HepG2 (cell line): ENCODE measurements at regions of chr2 and their contacts with region 1.

Region 1: GRCh38 chr2:55168221-55169154 is 63.6 kb downstream of the CLHC1 start:
- DNase-seq: peak; percentile 70
- ATAC-seq: peak; percentile 78
- H3K4me3 ChIP-seq: peak overlapping the region in 2 of 3 experiments; percentile 5 to 30; a peak in 3 of 6 replicates
- H3K27ac ChIP-seq: no peak overlapping the region
- H3K4me1 ChIP-seq: peaks cover 31% of the 10 kb centered on the region
- H3K27me3 ChIP-seq: peaks cover 0 to 6% of the 10 kb centered on the region in 2 experiments; a peak in 2 of 5 replicates
- CTCF ChIP-seq: peak; percentile 86
- EP300 ChIP-seq: no peak
- POLR2A ChIP-seq: no peak
- RAD21 ChIP-seq: peak; percentile 83

Region 2: DNA sequence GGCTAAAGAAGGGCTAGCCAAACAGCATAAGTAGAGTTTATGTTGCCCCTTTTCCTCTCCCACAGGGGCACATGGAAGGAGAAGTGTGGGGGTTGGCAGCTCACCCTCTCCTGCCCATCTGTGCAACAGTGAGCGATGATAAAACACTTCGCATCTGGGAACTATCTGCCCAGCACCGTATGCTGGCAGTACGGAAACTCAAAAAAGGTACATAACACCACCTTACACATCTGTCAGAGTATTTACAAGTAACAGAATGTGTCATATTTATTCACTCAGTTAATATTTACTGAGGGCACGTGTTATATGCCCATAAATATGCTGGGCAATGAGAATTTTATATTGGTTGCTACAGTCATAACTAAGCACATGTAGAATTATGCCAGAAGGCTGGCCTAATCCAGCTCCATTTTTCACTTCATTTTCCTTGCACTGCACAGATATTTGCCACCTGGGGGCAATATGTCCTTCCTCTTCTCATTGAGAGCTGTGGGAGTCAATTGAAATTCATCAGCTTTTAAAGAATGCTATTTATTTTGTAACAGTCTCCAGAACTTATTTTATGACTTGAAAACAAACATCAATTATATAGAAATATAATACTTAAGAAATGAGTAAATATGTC is 268.8 kb before region 1 on chr2:
- CTCF ChIA-PET with region 1: interaction called, 11 read pairs
- POLR2A ChIA-PET with region 1: no interaction called
- in situ Hi-C with region 1: no loop called
- intact Hi-C with region 1: loop called (anchors 1 kb)
- DNase-seq: peak; percentile 55
- ATAC-seq: peak; percentile 81
- H3K4me3 ChIP-seq: no peak overlapping the region
- H3K27ac ChIP-seq: no peak overlapping the region
- H3K4me1 ChIP-seq: peaks cover 18% of the 10 kb centered on the region
- H3K27me3 ChIP-seq: no peaks in the 10 kb centered on the region
- CTCF ChIP-seq: peak; percentile 72
- EP300 ChIP-seq: no peak
- POLR2A ChIP-seq: no peak
- RAD21 ChIP-seq: peak; percentile 63

Region 3: GRCh38 chr2:55063713-55064323 is 104.7 kb before region 1 on chr2:
- CTCF ChIA-PET with region 1: no interaction called
- POLR2A ChIA-PET with region 1: no interaction called
- in situ Hi-C with region 1: no loop called
- intact Hi-C with region 1: loop called (anchors 2 kb)
- DNase-seq: peak; percentile 32
- ATAC-seq: peak; percentile 98
- H3K4me3 ChIP-seq: no peak overlapping the region
- H3K27ac ChIP-seq: no peak overlapping the region
- H3K4me1 ChIP-seq: peaks cover 11% of the 10 kb centered on the region; the same call in 1 of the 2 replicates
- H3K27me3 ChIP-seq: no peaks in the 10 kb centered on the region
- CTCF ChIP-seq: peak; percentile 68
- EP300 ChIP-seq: no peak
- POLR2A ChIP-seq: no peak
- RAD21 ChIP-seq: 0 out of 2 replicates have a peak, but pooled peaks have one; percentile 19

Region 4: DNA sequence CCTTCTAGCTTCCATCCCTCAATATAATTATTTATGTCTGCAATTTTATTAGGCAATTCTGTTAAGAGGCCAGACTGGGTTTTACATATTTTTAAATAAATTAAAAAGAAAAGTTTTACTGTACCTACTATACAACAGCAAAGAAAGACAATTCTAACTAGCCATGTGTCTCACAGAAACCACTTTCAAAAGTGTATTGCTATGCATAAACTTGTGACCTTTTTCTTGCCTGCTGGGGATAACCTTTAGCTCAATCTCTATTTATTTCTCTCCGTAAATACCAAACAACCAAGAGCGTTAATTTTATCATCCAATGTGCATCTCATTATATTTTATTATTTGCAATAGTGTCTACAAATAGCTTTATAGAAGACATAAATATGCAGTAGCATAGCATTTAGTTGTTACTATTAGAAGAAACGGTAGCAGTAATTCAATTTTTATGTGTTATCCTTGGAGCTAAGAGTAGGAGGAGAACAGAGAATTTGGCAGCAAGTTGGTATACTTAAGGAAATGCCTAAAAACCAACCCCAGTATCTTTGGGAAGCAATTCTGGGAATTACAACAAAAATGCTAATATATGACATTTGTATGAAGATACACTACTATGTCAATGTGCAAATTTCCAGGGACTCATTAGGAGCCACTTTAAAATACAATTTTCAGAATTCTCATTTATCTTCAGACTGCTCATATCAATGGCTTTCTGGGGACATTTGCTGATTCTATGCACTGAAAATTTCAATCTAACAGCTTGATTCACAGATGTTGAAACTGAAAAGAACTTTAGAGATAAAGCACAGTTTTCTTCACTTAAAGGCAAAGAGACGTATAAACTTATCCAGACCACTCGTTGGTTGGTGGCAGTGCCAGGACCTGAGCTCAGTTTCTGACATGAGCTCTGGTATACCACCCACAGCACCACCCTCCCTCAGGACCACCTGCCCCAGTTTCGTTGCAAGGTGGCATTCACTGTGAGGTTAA is 95.2 kb before region 1 on chr2:
- CTCF ChIA-PET with region 1: interaction called, 3 read pairs
- POLR2A ChIA-PET with region 1: no interaction called
- in situ Hi-C with region 1: loop called (anchors 5 kb)
- intact Hi-C with region 1: loop called (anchors 1 kb)
- DNase-seq: no peak
- ATAC-seq: no peak
- H3K4me3 ChIP-seq: no peak overlapping the region
- H3K27ac ChIP-seq: no peak overlapping the region
- H3K4me1 ChIP-seq: 0 out of 2 replicates have a peak, but pooled peaks cover 12% of the 10 kb centered on the region
- H3K27me3 ChIP-seq: no peaks in the 10 kb centered on the region
- CTCF ChIP-seq: no peak
- EP300 ChIP-seq: no peak
- POLR2A ChIP-seq: no peak
- RAD21 ChIP-seq: no peak

Region 5: GRCh38 chr2:55111570-55112228 is 56.8 kb before region 1 on chr2:
- CTCF ChIA-PET with region 1: no interaction called
- POLR2A ChIA-PET with region 1: no interaction called
- in situ Hi-C with region 1: no loop called
- intact Hi-C with region 1: loop called (anchors 1 kb)
- DNase-seq: peak; percentile 68
- ATAC-seq: peak; percentile 72
- H3K4me3 ChIP-seq: peak overlapping the region; percentile 3 to 58 (median 39); a peak in 4 of 6 replicates
- H3K27ac ChIP-seq: no peak overlapping the region
- H3K4me1 ChIP-seq: peaks cover 72% of the 10 kb centered on the region
- H3K27me3 ChIP-seq: peaks cover 0 to 12% of the 10 kb centered on the region in 2 experiments; a peak in 3 of 5 replicates
- CTCF ChIP-seq: no peak
- EP300 ChIP-seq: 0 out of 4 replicates have a peak, but pooled peaks of 1 of the 2 experiments have one; percentile 25
- POLR2A ChIP-seq: no peak
- RAD21 ChIP-seq: no peak

Region 6: GRCh38 chr2:55123851-55124269 is 44.6 kb before region 1 on chr2:
- CTCF ChIA-PET with region 1: no interaction called
- POLR2A ChIA-PET with region 1: no interaction called
- in situ Hi-C with region 1: no loop called
- intact Hi-C with region 1: no loop called
- DNase-seq: no peak
- ATAC-seq: peak; percentile 44
- H3K4me3 ChIP-seq: no peak overlapping the region
- H3K27ac ChIP-seq: no peak overlapping the region
- H3K4me1 ChIP-seq: peaks cover 6% of the 10 kb centered on the region
- H3K27me3 ChIP-seq: peaks cover 4 to 31% of the 10 kb centered on the region in 2 experiments; a peak in 4 of 5 replicates
- CTCF ChIP-seq: no peak
- EP300 ChIP-seq: no peak
- POLR2A ChIP-seq: no peak
- RAD21 ChIP-seq: no peak